ENCODE measurements at regions of chr14 and their contacts with region 1.

Region 1: GRCh38 chr14:58171090-58171489 is 19.1 kb upstream of the ARMH4 start:
- DNase-seq: peak; percentile 99
- ATAC-seq: peak; percentile 99
- H3K4me3 ChIP-seq: no peak overlapping the region; the same call in 1 of the 2 replicates
- H3K27ac ChIP-seq: no peak overlapping the region
- H3K4me1 ChIP-seq: peaks cover 16% of the 10 kb centered on the region
- H3K27me3 ChIP-seq: 0 out of 2 replicates have a peak, but pooled peaks cover 7% of the 10 kb centered on the region
- CTCF ChIP-seq: no peak

Region 2: GRCh38 chr14:57533214-57533613 is 637.9 kb before region 1 on chr14:
- CTCF ChIA-PET with region 1: no interaction called
- POLR2A ChIA-PET with region 1: no interaction called
- intact Hi-C with region 1: loop called (anchors 10 kb)
- DNase-seq: peak; percentile 83
- ATAC-seq: peak; percentile 70
- H3K4me3 ChIP-seq: no peak overlapping the region
- H3K27ac ChIP-seq: no peak overlapping the region
- H3K4me1 ChIP-seq: no peaks in the 10 kb centered on the region
- H3K27me3 ChIP-seq: peaks cover 28% of the 10 kb centered on the region
- CTCF ChIP-seq: peak; percentile 96

Region 3: DNA sequence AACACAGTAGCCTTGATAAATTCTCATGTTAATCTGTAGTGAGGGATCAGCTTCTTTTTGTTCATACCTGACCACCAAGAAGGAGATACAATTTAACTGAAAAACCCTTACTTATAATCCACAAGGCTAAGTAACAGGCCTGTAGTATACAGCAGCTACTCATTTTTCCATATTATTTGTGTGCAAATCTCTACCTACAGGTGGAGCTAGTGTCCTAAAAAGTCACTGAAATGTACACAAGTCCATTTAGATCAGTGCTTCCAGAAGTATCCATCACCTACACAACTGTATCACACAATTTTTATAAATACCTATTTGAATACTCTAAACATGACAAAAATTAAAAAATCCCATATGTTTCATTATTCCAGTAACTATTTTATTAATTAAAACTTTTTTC is 478.4 kb before region 1 on chr14:
- CTCF ChIA-PET with region 1: no interaction called
- POLR2A ChIA-PET with region 1: no interaction called
- intact Hi-C with region 1: loop called (anchors 1 kb)
- DNase-seq: peak; percentile 94
- ATAC-seq: peak; percentile 98
- H3K4me3 ChIP-seq: no peak overlapping the region
- H3K27ac ChIP-seq: no peak overlapping the region
- H3K4me1 ChIP-seq: no peaks in the 10 kb centered on the region
- H3K27me3 ChIP-seq: peaks cover 24% of the 10 kb centered on the region
- CTCF ChIP-seq: peak; percentile 99